ENCODE measurements at regions of chr20 and their contacts with region 1.

Region 1: GRCh38 chr20:462199-462991 is at the start of gene TBC1D20:
- DNase-seq: peak; percentile 81 to 92 (median 89)
- ATAC-seq: peak; percentile 99
- H3K4me3 ChIP-seq: peak within 1 kb of the TSS; percentile 71
- H3K4me3 Mint-ChIP-seq: peak within 1 kb of the TSS; percentile 90 to 100 (median 97)
- H3K27ac ChIP-seq: peak within 1 kb of the TSS; percentile 85
- H3K27ac Mint-ChIP-seq: peak within 1 kb of the TSS; percentile 90 to 98 (median 95)
- H3K4me1 ChIP-seq: peaks cover 26 to 33% of the 10 kb centered on the region in 2 donors
- H3K4me1 Mint-ChIP-seq: peaks cover 31 to 55% (median 49%) of the 10 kb centered on the region in 7 donors
- H3K27me3 ChIP-seq: no peaks in the 10 kb centered on the region
- H3K27me3 Mint-ChIP-seq: peaks cover 0 to 2% (median 0%) of the 10 kb centered on the region in 5 donors
- total RNA-seq, gene TBC1D20: 26.3 to 45.7 (median 35.4) TPM

Region 2: DNA sequence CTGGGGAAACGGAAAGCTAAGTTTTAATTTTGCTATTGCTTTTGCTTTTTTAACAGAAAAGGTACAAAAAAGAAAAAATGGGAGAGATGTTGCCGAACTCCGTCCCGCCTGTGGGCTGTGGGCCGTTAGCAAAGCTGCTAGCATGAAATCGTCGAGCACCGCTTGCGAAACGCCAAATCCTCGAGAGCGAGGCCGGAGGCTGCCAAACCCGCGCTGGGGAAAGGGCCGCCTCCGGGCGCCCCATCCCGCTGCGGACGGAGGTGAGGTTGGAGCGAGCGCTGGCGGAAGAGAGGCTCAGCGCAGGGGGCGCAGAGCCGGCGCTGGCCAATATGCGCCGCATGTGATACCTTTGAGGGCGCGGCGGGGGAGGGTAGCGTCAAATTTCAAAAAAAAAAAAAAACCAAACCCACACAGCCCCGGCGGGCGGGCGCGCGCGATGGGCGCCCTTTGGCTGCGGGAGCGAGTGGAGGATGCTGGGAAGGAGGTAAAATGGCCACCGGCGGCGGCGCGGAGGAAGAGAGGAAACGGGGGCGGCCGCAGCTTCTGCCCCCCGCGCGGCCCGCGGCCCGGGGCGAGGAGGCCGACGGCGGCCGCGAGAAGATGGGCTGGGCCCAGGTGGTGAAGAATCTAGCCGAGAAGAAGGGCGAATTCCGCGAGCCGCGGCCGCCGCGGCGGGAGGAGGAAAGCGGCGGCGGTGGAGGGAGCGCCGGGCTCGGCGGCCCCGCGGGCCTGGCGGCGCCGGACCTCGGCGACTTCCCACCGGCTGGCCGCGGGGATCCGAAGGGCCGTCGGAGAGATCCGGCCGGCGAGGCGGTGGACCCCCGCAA is 165.1 kb before region 1 on chr20 and contains the start of gene ZCCHC3:
- CTCF ChIA-PET with region 1: no interaction called
- POLR2A ChIA-PET with region 1: no interaction called
- intact Hi-C with region 1: loop called (anchors 2 kb)
- DNase-seq: peak; percentile 72 to 89 (median 84)
- ATAC-seq: peak; percentile 94
- H3K4me3 ChIP-seq: peak within 1 kb of the TSS; percentile 96
- H3K4me3 Mint-ChIP-seq: peak within 1 kb of the TSS; percentile 92 to 100 (median 98)
- H3K27ac ChIP-seq: peak within 1 kb of the TSS; percentile 91
- H3K27ac Mint-ChIP-seq: peak within 1 kb of the TSS; percentile 94 to 100 (median 97)
- H3K4me1 ChIP-seq: peaks cover 14 to 21% of the 10 kb centered on the region in 2 donors
- H3K4me1 Mint-ChIP-seq: peaks cover 33 to 51% (median 40%) of the 10 kb centered on the region in 7 donors
- H3K27me3 ChIP-seq: no peaks in the 10 kb centered on the region
- H3K27me3 Mint-ChIP-seq: peaks cover 0 to 2% (median 0%) of the 10 kb centered on the region in 5 donors
- total RNA-seq, gene ZCCHC3: 14.6 to 31.9 (median 27.1) TPM

Region 3: GRCh38 chr20:364905-365794 is 97.2 kb before region 1 on chr20:
- CTCF ChIA-PET with region 1: no interaction called
- POLR2A ChIA-PET with region 1: no interaction called
- intact Hi-C with region 1: loop called in 1 of 2 experiments (anchors 5 kb)
- DNase-seq: no peak
- ATAC-seq: no peak
- H3K4me3 ChIP-seq: no peak overlapping the region
- H3K4me3 Mint-ChIP-seq: peak overlapping the region; percentile 41 to 73 (median 58)
- H3K27ac ChIP-seq: no peak overlapping the region
- H3K27ac Mint-ChIP-seq: peak overlapping the region in 7 of 9 donors; percentile 49 to 96 (median 82)
- H3K4me1 ChIP-seq: peaks cover 0 to 20% of the 10 kb centered on the region in 2 donors
- H3K4me1 Mint-ChIP-seq: peaks cover 23 to 55% (median 47%) of the 10 kb centered on the region in 7 donors
- H3K27me3 ChIP-seq: no peaks in the 10 kb centered on the region
- H3K27me3 Mint-ChIP-seq: no peaks in the 10 kb centered on the region

Region 4: GRCh38 chr20:381581-382290 is 80.7 kb before region 1 on chr20:
- CTCF ChIA-PET with region 1: no interaction called
- POLR2A ChIA-PET with region 1: no interaction called
- intact Hi-C with region 1: loop called (anchors 1 to 2 kb)
- DNase-seq: peak; percentile 41 to 75 (median 64)
- ATAC-seq: peak; percentile 81
- H3K4me3 ChIP-seq: peak overlapping the region; percentile 64
- H3K4me3 Mint-ChIP-seq: peak overlapping the region; percentile 66 to 91 (median 84)
- H3K27ac ChIP-seq: peak overlapping the region; percentile 73
- H3K27ac Mint-ChIP-seq: peak overlapping the region; percentile 55 to 86 (median 78)
- H3K4me1 ChIP-seq: no peaks in the 10 kb centered on the region
- H3K4me1 Mint-ChIP-seq: peaks cover 4 to 34% (median 13%) of the 10 kb centered on the region in 7 donors
- H3K27me3 ChIP-seq: no peaks in the 10 kb centered on the region
- H3K27me3 Mint-ChIP-seq: peaks cover 0 to 3% (median 0%) of the 10 kb centered on the region in 5 donors

Region 5: GRCh38 chr20:438571-439469 is 23.6 kb before region 1 on chr20:
- CTCF ChIA-PET with region 1: interaction called, 5 read pairs
- POLR2A ChIA-PET with region 1: interaction called, 16 read pairs
- intact Hi-C with region 1: loop called (anchors 1 kb)
- DNase-seq: peak; percentile 29 to 72 (median 60)
- ATAC-seq: peak; percentile 91
- H3K4me3 ChIP-seq: peak overlapping the region; percentile 45
- H3K4me3 Mint-ChIP-seq: peak overlapping the region; percentile 76 to 97 (median 82)
- H3K27ac ChIP-seq: peak overlapping the region; percentile 39
- H3K27ac Mint-ChIP-seq: peak overlapping the region; percentile 10 to 90 (median 79)
- H3K4me1 ChIP-seq: peaks cover 38 to 42% of the 10 kb centered on the region in 2 donors
- H3K4me1 Mint-ChIP-seq: peaks cover 51 to 72% (median 68%) of the 10 kb centered on the region in 7 donors
- H3K27me3 ChIP-seq: no peaks in the 10 kb centered on the region
- H3K27me3 Mint-ChIP-seq: no peaks in the 10 kb centered on the region

Region 6: DNA sequence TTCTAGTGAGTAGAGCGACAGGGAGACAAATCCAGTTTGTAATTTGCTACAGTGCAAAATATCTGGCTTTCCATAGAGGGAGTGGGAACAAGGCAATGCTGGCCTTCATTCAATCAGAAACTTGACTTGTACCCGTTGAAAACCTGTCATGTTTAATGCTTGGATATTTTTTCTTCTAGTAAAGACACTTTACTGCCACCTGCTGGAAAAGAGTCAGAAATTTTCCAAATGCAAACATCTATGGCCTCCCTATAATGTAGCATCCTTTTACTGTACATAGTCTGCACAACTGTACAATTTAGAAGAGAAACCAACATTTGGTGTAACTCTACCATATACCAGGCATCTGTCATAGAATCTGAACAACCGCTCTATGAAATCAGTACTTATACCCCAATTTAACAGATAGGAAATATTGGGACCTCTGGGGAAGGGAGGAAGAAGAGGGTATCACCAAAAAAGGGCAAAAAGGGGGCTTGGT is 16.6 kb after region 1 on chr20:
- CTCF ChIA-PET with region 1: interaction called, 6 read pairs
- POLR2A ChIA-PET with region 1: interaction called, 4 read pairs
- intact Hi-C with region 1: loop called (anchors 1 kb)
- DNase-seq: peak in 7 of 9 donors; percentile 45 to 75 (median 68)
- ATAC-seq: peak; percentile 84
- H3K4me3 ChIP-seq: no peak overlapping the region
- H3K4me3 Mint-ChIP-seq: no peak overlapping the region
- H3K27ac ChIP-seq: no peak overlapping the region
- H3K27ac Mint-ChIP-seq: peak overlapping the region in 7 of 9 donors; percentile 27 to 82 (median 56)
- H3K4me1 ChIP-seq: peaks cover 0 to 6% of the 10 kb centered on the region in 2 donors
- H3K4me1 Mint-ChIP-seq: peaks cover 8 to 27% (median 24%) of the 10 kb centered on the region in 7 donors
- H3K27me3 ChIP-seq: no peaks in the 10 kb centered on the region
- H3K27me3 Mint-ChIP-seq: no peaks in the 10 kb centered on the region

Region 7: GRCh38 chr20:543369-544152 is 81.2 kb after region 1 on chr20 and contains the start of gene CSNK2A1:
- CTCF ChIA-PET with region 1: no interaction called
- POLR2A ChIA-PET with region 1: interaction called, 5 read pairs
- intact Hi-C with region 1: loop called (anchors 1 kb)
- DNase-seq: peak; percentile 93 to 99 (median 97)
- ATAC-seq: peak; percentile 97
- H3K4me3 ChIP-seq: peak within 1 kb of the TSS; percentile 59
- H3K4me3 Mint-ChIP-seq: peak within 1 kb of the TSS; percentile 86 to 100 (median 91)
- H3K27ac ChIP-seq: peak within 1 kb of the TSS; percentile 94
- H3K27ac Mint-ChIP-seq: peak within 1 kb of the TSS; percentile 97 to 100 (median 98)
- H3K4me1 ChIP-seq: peaks cover 17 to 39% of the 10 kb centered on the region in 2 donors
- H3K4me1 Mint-ChIP-seq: peaks cover 40 to 58% (median 54%) of the 10 kb centered on the region in 7 donors
- H3K27me3 ChIP-seq: no peaks in the 10 kb centered on the region
- H3K27me3 Mint-ChIP-seq: peaks cover 0 to 9% (median 5%) of the 10 kb centered on the region in 5 donors
- total RNA-seq, gene CSNK2A1: 69.7 to 117 (median 90.8) TPM

Region 8: GRCh38 chr20:2230716-2231488 is 1768.5 kb after region 1 on chr20:
- CTCF ChIA-PET with region 1: no interaction called
- POLR2A ChIA-PET with region 1: no interaction called
- intact Hi-C with region 1: no loop called
- DNase-seq: no peak
- ATAC-seq: no peak
- H3K4me3 ChIP-seq: no peak overlapping the region
- H3K4me3 Mint-ChIP-seq: no peak overlapping the region
- H3K27ac ChIP-seq: no peak overlapping the region
- H3K27ac Mint-ChIP-seq: no peak overlapping the region
- H3K4me1 ChIP-seq: no peaks in the 10 kb centered on the region
- H3K4me1 Mint-ChIP-seq: no peaks in the 10 kb centered on the region
- H3K27me3 ChIP-seq: no peaks in the 10 kb centered on the region
- H3K27me3 Mint-ChIP-seq: peaks cover 0 to 2% (median 0%) of the 10 kb centered on the region in 5 donors